Activated T-helper 1 cell treated with anti-CD3 and anti-CD28 coated beads, Interleukin-12 subunit alpha, Interleukin-12 subunit beta, Interleukin-2, Interleukin-4 antibody, amounts not matched to agents 30 ng/mL and 10 ng/mL and 1 ng/mL, durations not matched to agents 14 hours and 24 hours and 36 hours (primary cell): ENCODE measurements at regions of chr3 and their contacts with region 1.

Region 1: GRCh38 chr3:197949754-197950660 is at the start of gene RPL35A:
- DNase-seq: peak; percentile 79
- H3K4me3 Mint-ChIP-seq: peak within 1 kb of the TSS; percentile 99
- H3K27ac Mint-ChIP-seq: peak within 1 kb of the TSS; percentile 97
- H3K4me1 Mint-ChIP-seq: peaks cover 48% of the 10 kb centered on the region
- H3K27me3 Mint-ChIP-seq: no peaks in the 10 kb centered on the region
- total RNA-seq, gene RPL35A: 1,253 and 1,262 TPM in 2 replicates

Region 2: GRCh38 chr3:197736491-197737318 is 213.3 kb before region 1 on chr3 and contains the start of gene RUBCN:
- intact Hi-C with region 1: loop called (anchors 2 kb)
- DNase-seq: peak; percentile 94
- H3K4me3 Mint-ChIP-seq: peak within 1 kb of the TSS; percentile 90
- H3K27ac Mint-ChIP-seq: peak within 1 kb of the TSS; percentile 95
- H3K4me1 Mint-ChIP-seq: peaks cover 36% of the 10 kb centered on the region
- H3K27me3 Mint-ChIP-seq: peaks cover 4% of the 10 kb centered on the region
- total RNA-seq, gene RUBCN: 44.7 and 45.2 TPM in 2 replicates

Region 3: DNA sequence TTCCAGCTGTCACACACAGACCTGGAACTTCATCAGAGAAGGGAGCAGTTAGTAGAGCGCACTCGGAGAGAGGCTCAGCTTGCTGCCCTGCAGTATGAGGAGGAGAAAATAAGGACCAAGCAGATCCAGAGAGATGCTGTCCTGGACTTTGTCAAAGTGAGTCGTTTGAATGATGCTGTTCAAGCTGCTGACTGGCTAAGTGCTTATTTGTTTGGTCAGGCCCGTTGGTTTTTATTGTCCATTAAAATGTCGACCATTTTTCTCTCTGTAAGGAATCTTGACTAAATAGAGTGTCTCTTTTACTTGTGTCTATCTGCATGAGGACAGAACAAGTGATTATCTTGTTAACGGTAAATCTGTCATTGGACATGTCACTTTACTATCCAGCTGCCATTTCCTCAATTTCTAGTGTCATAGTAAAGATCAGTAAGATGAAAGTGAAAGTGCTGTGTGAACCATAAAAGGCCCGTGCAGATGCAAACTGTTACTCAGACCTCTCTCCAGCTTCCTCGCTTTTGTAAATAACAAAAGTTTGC is 102.1 kb before region 1 on chr3:
- intact Hi-C with region 1: loop called (anchors 2 kb)
- DNase-seq: peak; percentile 18
- H3K4me3 Mint-ChIP-seq: peak overlapping the region; percentile 52
- H3K27ac Mint-ChIP-seq: peak overlapping the region; percentile 83
- H3K4me1 Mint-ChIP-seq: peaks cover 30% of the 10 kb centered on the region
- H3K27me3 Mint-ChIP-seq: no peaks in the 10 kb centered on the region

Region 4: DNA sequence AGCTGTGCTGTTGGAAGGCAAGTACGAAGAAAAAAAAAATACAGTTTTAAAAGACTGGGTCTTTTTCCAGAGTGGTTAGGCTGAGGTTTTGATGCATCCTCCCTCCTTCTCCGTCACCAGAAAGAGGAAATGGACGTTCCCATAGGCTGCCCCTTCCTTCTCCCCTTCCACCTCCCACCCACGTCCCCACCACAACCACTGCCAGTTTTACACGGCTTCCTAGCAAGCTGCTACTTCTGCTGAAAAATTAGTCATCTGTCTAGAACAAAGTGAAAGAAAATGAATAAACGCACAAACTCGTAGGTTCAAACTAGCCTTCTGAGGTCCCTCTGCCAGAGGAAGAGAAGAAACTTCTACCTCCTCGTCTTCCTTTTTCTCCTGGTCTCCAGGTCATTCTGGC is 71.6 kb before region 1 on chr3:
- intact Hi-C with region 1: loop called (anchors 2 kb)
- DNase-seq: peak; percentile 46
- H3K4me3 Mint-ChIP-seq: peak overlapping the region; percentile 65
- H3K27ac Mint-ChIP-seq: peak overlapping the region; percentile 90
- H3K4me1 Mint-ChIP-seq: peaks cover 25% of the 10 kb centered on the region
- H3K27me3 Mint-ChIP-seq: no peaks in the 10 kb centered on the region

Region 5: DNA sequence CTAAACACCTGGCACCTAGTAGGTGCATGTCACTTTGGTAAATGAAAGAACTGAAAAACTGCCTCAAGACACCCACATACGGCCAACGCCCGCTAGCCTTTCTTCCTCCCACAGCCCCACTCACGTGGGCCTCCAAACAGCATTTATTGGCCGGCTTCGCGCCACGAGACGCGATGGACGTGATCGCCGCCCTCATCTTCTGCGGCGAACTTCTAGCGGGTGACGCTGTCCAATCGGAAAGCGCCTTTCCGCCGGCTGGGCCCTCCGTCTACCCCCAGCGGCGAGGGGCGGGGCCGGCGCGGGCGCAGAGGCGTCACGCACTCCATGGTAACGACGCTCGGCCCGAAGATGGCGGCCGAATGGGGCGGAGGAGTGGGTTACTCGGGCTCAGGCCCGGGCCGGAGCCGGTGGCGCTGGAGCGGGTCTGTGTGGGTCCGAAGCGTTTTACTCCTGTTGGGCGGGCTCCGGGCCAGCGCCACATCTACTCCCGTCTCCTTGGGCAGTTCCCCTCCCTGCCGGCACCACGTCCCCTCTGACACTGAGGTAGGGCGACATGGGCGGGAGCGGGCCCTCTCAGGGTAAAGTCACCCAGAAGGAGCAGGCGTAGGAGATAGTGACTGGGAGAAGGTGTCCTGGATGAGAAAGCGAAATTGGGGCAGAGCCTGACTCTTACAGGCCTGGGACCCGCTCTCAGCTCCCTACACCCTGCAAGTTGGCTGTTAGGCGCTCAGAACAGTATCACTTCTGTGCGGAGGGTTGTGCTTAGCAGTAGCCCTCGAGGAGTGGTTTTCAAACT is 10.1 kb after region 1 on chr3 and contains the start of gene LMLN:
- intact Hi-C with region 1: loop called (anchors 1 kb)
- DNase-seq: peak; percentile 94
- H3K4me3 Mint-ChIP-seq: peak within 1 kb of the TSS; percentile 86
- H3K27ac Mint-ChIP-seq: peak within 1 kb of the TSS; percentile 93
- H3K4me1 Mint-ChIP-seq: peaks cover 51% of the 10 kb centered on the region
- H3K27me3 Mint-ChIP-seq: no peaks in the 10 kb centered on the region
- total RNA-seq, gene LMLN: 2.8 and 3.7 TPM in 2 replicates

Region 6: DNA sequence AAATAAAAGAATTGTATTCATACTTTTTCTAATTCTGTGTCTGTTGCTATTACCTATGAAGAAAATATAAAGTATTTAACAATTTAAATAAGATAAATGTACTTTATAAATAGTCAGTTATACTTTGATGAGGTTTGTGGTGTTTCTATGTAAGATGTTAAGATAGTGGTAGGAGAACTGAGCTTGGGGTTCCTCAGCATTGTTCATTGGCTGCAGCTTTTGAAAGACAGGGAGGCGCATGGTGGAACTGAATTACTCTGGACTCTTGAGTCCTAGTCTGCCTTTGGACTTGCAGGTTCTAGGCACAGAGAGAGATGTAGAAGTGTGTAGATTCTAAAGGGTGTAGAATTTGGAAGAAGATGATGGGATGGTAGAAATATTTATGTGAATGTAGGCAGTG is 33.1 kb after region 1 on chr3:
- intact Hi-C with region 1: no loop called
- DNase-seq: no peak
- H3K4me3 Mint-ChIP-seq: no peak overlapping the region
- H3K27ac Mint-ChIP-seq: no peak overlapping the region
- H3K4me1 Mint-ChIP-seq: no peaks in the 10 kb centered on the region
- H3K27me3 Mint-ChIP-seq: peaks cover 1% of the 10 kb centered on the region